Left ventricle myocardium inferior (tissue), 1 donor: ENCODE measurements at regions of chr7 and their contacts with region 1.

Region 1: DNA sequence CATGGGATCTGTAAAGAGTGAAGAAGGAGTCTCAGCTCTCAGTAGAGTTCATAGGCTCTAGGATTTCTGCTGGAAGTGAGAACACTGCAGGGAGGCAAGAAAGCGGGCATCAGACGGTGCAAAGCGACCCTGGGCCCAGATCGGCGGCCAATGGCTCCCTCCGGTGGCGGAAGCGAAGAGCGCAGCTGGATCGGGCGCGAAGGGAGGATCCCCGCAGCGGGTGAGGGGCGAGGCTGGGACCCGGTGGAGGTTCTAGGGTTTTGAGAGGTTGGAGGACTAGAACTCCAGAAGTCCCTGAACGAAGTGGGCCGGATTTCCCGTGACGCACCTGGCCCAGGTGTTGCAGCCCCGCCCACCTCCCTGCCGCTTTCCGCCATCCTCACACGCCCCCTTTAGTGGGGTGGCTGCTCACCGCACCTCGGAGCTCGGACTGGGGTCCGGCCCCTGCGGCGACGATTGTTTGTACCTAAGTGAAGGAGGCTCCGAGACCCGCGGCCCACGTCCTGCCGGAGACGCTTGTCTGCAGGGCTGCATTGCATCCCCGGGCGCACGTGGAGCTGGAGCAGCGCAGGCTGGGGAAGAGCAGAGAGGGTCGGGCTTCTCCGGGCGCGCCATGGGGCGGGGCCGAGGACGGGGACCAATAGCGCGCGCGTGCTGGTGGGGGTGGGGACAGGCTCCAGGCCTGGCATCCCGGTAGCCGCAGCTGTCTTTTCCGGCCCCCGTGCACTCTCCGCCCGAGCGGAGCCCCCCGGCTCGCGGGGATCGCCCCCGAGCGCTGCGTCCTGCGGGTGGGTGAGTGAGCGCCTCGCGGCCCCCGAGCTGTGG is at the start of gene SLC12A9:
- DNase-seq: peak; percentile 92
- H3K4me3 ChIP-seq: peak within 1 kb of the TSS; percentile 81
- H3K27ac ChIP-seq: peak within 1 kb of the TSS; percentile 83
- H3K4me1 ChIP-seq: peaks cover 18% of the 10 kb centered on the region
- H3K27me3 ChIP-seq: no peaks in the 10 kb centered on the region
- CTCF ChIP-seq: peak; percentile 96
- total RNA-seq, gene SLC12A9: 10.9 TPM

Region 2: DNA sequence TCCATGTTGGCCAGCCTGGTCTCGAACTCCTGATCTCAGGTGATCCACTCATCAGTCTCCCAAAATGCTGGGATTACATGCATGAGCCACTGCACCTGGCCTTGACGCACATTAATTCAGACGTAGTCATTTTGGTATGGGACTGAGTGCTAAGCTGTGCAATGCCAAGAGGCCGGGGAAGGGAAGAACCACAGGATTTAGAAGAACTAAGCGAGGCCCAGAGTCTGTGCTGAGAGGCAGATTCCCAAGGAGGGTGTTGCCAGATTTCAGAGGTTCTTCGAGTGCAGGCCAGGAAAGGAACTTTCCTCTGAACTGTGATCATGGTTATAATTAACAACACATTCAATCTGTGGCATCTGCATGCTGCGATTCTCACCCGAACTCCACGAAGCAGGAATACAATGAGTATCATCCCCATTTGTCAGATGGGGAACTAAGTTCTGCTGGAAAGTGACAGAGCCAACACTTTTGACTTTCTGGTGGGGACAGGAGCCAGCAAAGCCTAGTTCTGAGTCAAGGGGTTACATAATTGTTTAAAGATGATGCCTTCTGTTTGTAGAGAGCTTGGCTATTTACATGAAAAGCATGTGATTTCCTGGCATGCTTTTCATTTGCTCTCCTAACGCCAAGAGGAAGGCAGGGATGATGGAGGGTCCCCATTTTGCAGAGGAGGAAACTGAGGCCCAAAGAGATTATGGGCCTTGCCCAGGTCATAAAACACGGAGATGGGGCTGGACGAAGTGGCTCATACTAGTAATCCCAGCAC is 125.1 kb before region 1 on chr7:
- intact Hi-C with region 1: no loop called
- DNase-seq: no peak
- H3K4me3 ChIP-seq: no peak overlapping the region
- H3K27ac ChIP-seq: no peak overlapping the region
- H3K4me1 ChIP-seq: no peaks in the 10 kb centered on the region
- H3K27me3 ChIP-seq: peaks cover 87% of the 10 kb centered on the region
- CTCF ChIP-seq: no peak

Region 3: DNA sequence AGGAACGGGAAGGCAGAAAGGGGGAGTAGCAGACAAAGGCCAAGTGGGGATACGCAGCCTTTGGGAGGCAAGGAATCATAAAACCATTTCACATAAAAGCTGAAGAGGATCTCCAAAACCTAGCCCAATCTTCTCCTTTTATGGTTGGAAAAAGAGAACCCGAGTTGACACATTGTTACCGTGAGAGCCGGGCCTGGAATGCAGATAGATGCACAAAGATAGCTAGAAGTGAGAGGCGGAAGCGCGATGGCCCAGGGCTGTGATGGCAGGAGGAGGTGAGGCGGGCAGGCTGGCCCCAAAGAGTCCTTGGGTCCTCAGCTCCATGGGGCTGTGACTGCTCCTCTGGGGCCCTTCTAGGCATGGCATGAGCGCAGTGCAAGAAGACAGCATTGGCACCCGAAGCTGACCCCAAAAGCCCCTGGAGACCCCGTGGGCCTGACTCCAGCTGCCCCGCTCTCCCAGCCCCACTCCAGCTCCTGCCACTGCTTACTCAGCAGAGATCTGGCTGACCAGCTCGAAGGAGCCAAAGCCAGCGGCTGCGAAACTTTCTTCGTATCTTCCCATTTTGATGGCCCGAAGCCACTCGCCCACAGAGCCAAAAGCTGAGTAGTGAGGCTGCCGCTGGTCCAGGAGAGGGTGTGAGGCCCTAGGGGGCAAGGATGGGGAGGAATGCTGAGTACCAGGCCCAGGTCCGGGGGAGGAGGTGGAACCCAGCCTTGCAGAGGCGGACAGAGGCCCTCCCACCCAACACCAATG is 47.4 kb before region 1 on chr7:
- intact Hi-C with region 1: loop called (anchors 5 kb)
- DNase-seq: no peak
- H3K4me3 ChIP-seq: no peak overlapping the region
- H3K27ac ChIP-seq: peak overlapping the region; percentile 66
- H3K4me1 ChIP-seq: peaks cover 71% of the 10 kb centered on the region
- H3K27me3 ChIP-seq: peaks cover 14% of the 10 kb centered on the region
- CTCF ChIP-seq: no peak